Posterior vena cava (tissue), 2 donors: ENCODE measurements at regions of chr10 and their contacts with region 1.

Region 1: DNA sequence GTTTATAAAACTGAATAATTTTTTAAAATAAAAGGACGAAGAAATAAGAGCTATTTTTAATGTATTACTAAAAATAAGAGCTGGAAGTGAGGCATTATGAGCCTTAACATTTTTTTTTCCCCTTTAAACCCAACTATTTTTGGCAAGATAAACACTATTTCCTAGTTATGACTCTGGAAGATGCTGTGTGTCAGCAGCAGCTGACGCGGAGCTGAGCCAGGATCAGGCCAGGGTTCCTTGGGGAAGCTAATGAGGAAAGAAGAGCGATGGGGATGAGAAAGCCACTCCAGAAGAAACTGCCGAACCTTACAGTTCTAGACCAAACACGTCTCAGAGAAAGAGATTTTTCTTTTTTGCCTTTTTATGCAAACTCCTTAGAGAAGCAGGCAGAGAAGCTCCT is 85.9 kb downstream of the USP6NL start:
- DNase-seq: peak; percentile 95

Region 2: DNA sequence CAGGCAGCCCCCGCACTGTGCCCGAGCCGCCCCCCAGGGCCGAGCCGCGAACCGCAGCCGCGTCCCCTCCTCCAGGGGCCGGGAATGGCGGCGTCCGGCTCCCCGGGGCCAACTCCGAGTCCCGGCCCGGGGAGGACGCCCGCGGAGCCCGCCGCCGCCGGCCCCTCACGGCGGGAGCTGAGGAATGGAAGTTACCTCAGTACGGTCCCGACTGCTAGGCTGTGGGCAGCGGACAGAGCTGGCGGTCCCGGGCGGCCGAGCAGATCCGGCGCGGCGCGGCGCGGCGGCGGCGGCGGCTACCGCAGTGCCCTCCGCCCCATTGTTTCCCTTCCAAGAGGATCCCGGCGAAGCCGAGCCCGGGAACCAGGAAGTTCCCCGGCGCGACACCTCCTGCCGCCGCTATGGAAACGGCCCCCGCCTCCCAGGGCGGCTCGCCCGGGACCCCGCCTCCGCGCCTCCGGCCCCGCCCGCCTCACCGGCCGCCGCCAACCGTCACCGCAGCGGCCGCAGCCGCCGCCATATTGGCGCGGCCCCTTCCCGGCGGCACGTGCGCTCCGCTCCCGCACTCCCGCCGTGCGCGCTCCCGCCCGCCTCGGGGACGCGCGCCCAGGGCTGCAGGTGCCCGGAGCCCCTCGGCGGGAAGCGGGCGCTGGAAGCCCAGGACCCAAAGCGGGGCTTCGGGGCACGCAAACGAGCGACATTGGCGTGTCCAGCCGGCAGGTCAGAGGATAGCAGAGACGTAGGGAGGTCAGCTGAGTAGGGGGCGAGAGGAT is 85.9 kb after region 1 on chr10 and contains the start of gene USP6NL:
- intact Hi-C with region 1: loop called in 1 of 2 experiments (anchors 5 kb)
- DNase-seq: peak; percentile 97
- total RNA-seq, gene USP6NL: 11.2 to 18.4 TPM